HEK293 (cell line): ENCODE measurements at regions of chr18 and their contacts with region 1.

Region 1: DNA sequence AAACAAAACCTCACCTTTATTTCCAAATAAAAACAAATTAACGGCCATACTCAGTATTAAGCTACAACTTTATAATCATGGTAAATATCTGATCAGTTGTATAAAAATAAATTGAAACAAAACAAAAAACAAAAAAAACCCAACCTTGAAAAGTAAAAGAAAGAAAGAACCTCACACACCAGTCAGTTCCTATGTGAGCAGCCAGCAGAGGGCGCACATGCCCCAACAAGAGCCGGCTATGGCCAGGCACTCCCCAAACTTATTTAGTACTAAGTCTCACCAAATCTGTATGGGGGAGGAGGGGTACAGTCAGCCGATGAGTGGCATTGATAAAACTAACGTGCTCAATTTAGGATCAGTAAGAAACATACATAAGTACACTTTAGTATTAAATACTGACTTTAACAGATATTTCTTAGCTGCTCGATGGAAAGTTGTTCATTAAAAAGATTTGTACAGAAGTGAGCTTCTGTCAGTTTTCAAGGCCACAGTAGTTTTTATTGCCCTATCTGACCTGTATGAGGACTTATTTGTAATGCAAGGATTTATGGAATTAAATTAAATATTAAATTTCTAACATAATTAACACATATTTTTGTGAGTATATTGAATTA is 172.6 kb downstream of the TCF4 start:
- H3K4me3 ChIP-seq: no peak overlapping the region
- H3K27ac ChIP-seq: no peak overlapping the region
- H3K4me1 ChIP-seq: peaks cover 10% of the 10 kb centered on the region; the same call in 1 of the 2 replicates
- CTCF ChIP-seq: peak; percentile 86

Region 2: DNA sequence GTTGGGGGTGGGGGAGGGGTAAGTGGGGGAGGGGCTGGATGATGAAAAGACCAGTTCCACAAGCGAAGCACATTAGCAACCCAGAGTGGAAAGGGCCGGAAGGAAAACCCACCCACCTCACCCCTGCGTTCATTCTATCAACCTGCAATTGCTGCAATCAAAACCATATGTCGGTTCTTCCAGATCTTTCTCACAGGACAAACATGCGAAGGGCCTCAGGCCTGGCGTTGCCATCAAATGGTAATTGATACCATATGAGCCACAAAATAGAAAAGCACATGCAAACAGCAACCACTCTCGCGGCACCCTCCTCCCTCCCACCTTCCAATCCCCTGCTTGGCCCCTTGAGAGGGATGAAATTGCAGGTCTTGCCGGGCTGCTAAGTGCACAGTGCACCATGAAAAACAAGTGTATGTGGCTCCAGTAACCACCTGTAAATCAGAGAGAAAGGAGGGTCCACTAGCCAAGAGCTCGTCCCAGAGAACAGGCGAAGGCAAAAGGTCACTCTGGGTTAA is 114.9 kb before region 1 on chr18:
- CTCF ChIA-PET with region 1: no interaction called
- POLR2A ChIA-PET with region 1: no interaction called
- H3K4me3 ChIP-seq: no peak overlapping the region
- H3K27ac ChIP-seq: no peak overlapping the region
- H3K4me1 ChIP-seq: no peaks in the 10 kb centered on the region
- CTCF ChIP-seq: no peak

Region 3: DNA sequence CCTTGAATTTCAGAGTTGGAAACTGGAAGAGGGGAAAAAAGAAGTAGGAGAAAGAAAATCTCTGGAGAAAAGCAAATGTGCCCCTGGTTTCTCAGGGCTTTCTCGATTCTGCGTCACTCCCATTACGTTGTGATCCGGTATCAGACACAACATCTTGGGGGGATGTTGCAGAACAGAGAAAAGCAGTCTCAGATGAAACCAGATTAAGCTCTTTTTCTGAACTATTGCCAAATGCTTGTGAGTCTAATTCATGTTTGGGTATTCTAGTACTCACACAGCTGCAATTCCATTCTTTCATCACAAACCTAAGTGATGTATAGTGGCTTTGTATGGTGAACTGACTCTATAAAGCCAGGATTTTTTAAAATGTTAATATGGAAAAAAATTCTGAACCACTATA is 60.6 kb before region 1 on chr18:
- CTCF ChIA-PET with region 1: no interaction called
- POLR2A ChIA-PET with region 1: no interaction called
- H3K4me3 ChIP-seq: no peak overlapping the region
- H3K27ac ChIP-seq: no peak overlapping the region
- H3K4me1 ChIP-seq: peaks cover 37% of the 10 kb centered on the region
- CTCF ChIP-seq: no peak

Region 4: DNA sequence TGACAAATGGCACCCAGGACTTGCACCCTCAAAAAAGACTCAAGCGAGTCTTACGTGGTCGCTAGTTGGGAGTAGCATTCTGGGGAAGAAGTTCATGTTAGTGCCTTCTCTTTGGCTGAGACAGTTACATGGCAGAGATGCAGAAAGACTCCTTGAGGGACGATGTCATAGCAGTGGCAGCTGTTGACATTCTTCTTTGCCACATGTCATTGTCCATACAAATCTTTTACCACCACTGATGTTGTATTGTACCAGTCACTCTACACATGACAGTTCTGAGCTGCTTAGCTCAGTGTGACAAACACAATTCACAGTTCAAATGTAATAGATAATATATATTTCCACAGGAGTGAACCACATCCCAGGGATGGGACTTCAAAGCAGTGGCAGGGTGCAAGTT is 24.5 kb before region 1 on chr18:
- CTCF ChIA-PET with region 1: interaction called, 10 read pairs
- POLR2A ChIA-PET with region 1: no interaction called
- H3K4me3 ChIP-seq: no peak overlapping the region
- H3K27ac ChIP-seq: no peak overlapping the region
- H3K4me1 ChIP-seq: peaks cover 5% of the 10 kb centered on the region; the same call in 1 of the 2 replicates
- CTCF ChIP-seq: no peak

Region 5: DNA sequence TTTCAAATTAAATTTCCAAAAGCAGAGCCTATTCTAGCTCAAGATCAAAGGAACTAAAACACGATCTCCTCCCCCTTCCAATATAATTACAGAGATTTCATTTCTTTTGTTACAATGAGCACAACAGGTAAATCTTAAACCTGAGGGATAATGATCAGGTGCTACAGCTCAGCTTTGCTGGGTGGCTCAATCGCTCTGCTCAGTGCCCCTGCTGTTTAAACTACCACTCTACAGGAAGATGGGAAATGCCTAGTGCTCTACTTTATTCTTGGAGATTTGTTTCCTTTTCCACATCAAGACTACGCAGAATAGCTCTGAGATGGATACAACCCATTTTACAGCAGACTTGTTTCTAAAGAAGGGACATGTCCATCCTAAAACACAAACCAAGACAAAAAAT is 10.3 kb after region 1 on chr18:
- CTCF ChIA-PET with region 1: interaction called, 51 read pairs
- POLR2A ChIA-PET with region 1: no interaction called
- H3K4me3 ChIP-seq: no peak overlapping the region
- H3K27ac ChIP-seq: no peak overlapping the region
- H3K4me1 ChIP-seq: peaks cover 5% of the 10 kb centered on the region; the same call in 1 of the 2 replicates
- CTCF ChIP-seq: no peak

Region 6: GRCh38 chr18:55439056-55439455 is 23.7 kb after region 1 on chr18:
- CTCF ChIA-PET with region 1: interaction called, 13 read pairs
- POLR2A ChIA-PET with region 1: no interaction called
- H3K4me3 ChIP-seq: no peak overlapping the region
- H3K27ac ChIP-seq: no peak overlapping the region
- H3K4me1 ChIP-seq: no peaks in the 10 kb centered on the region
- CTCF ChIP-seq: no peak

Region 7: GRCh38 chr18:55781481-55781957 is 366.2 kb after region 1 on chr18:
- CTCF ChIA-PET with region 1: interaction called, 29 read pairs
- POLR2A ChIA-PET with region 1: no interaction called
- H3K4me3 ChIP-seq: no peak overlapping the region
- H3K27ac ChIP-seq: no peak overlapping the region
- H3K4me1 ChIP-seq: peaks cover 6% of the 10 kb centered on the region; the same call in 1 of the 2 replicates
- CTCF ChIP-seq: peak; percentile 72; the same call in 1 of the 2 replicates

Region 8: DNA sequence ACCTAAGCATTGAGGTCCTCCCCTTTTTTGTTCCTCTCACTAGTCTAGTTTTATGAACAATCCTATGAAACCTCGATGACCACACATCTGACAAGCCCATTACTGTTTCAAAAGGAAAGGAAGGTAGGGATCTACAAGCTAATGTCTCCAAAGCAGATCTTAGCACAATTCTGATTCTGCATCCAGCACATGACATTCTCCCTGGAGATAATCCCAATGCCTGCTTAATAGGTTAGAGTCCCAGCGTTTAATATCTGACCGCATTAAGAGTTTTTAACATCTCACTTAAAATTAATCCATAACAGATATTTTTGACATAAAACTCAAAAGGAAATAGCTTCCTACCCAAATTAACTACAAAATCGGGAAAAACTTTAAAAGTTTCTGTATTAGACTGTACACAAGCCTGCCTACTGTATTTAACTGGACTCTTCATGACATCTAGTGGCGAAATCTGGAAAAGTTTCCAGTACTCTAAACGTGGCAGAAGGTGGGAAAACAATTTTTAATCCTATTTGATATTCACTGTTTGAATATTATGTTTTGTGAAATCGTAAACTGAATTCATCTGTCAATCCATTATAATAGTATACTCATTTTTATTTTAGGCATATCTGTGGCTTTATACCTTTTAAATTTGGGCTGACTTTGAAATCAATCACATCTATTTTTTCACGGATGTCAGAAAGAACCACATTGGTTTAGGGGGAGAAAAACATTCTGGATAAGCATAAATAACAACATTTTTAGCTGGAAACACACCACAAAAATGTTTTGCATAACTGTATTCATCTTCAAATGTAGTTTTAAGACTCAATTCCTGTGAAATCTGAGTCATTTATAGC is 1160.7 kb after region 1 on chr18:
- CTCF ChIA-PET with region 1: interaction called, 13 read pairs
- POLR2A ChIA-PET with region 1: no interaction called
- H3K4me3 ChIP-seq: no peak overlapping the region
- H3K27ac ChIP-seq: no peak overlapping the region
- H3K4me1 ChIP-seq: no peaks in the 10 kb centered on the region
- CTCF ChIP-seq: no peak